CD4-positive, alpha-beta memory T cell (primary cell): ENCODE measurements at regions of chr2 and their contacts with region 1.

Region 1: GRCh38 chr2:28610583-28611201 is 114.8 kb downstream of the PLB1 start:
- DNase-seq: no peak
- H3K4me3 ChIP-seq: no peak overlapping the region
- H3K4me3 Mint-ChIP-seq: peak overlapping the region in 1 of 8 donors; percentile 8
- H3K27ac ChIP-seq: no peak overlapping the region
- H3K27ac Mint-ChIP-seq: peak overlapping the region in 6 of 7 donors; percentile 34 to 73 (median 48)
- H3K4me1 ChIP-seq: peaks cover 37% of the 10 kb centered on the region
- H3K4me1 Mint-ChIP-seq: peaks cover 5 to 32% (median 21%) of the 10 kb centered on the region in 4 donors
- H3K27me3 ChIP-seq: no peaks in the 10 kb centered on the region
- H3K27me3 Mint-ChIP-seq: no peaks in the 10 kb centered on the region

Region 2: GRCh38 chr2:28621172-28622100 is 10.7 kb after region 1 on chr2:
- CTCF ChIA-PET with region 1: interaction called, 7 read pairs
- POLR2A ChIA-PET with region 1: interaction called, 41 read pairs
- intact Hi-C with region 1: loop called (anchors 1 kb)
- DNase-seq: peak; percentile 92 to 97 (median 95)
- H3K4me3 ChIP-seq: peak overlapping the region in 1 of 2 donors; percentile 39
- H3K4me3 Mint-ChIP-seq: peak overlapping the region; percentile 65 to 84 (median 76)
- H3K27ac ChIP-seq: peak overlapping the region; percentile 97
- H3K27ac Mint-ChIP-seq: peak overlapping the region; percentile 98 to 100 (median 100)
- H3K4me1 ChIP-seq: peaks cover 98% of the 10 kb centered on the region
- H3K4me1 Mint-ChIP-seq: peaks cover 78 to 98% (median 80%) of the 10 kb centered on the region in 4 donors
- H3K27me3 ChIP-seq: no peaks in the 10 kb centered on the region
- H3K27me3 Mint-ChIP-seq: no peaks in the 10 kb centered on the region